ENCODE measurements at regions of chr10 and their contacts with region 1.

Region 1: DNA sequence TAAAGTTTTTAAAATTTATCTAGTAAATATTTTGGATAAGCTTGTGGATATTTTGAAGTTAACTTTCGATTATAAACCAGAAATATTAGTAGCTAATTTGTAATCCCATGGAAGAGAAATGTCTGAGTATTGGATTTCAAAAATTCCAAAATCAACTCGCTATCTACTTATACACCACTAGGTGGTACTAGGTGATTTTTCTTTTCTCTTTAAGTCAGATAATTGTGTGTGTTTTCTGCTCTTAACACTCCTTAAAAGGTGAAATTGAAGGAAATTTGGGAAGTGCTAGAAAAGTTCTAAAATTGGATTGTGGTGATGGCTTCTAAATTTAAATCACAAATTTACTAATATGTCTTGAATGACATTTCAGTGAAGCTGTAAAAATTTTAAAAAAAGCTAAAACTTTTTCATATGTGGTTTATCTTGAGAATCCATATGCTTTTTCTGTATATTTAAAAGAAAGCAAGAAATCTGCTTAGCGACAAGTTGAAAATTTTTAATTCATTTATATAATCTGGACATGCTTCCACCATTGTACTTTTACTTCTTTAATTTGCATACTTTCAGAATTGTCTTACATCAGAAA is 90.2 kb downstream of the IPMK start:
- DNase-seq: no peak

Region 2: DNA sequence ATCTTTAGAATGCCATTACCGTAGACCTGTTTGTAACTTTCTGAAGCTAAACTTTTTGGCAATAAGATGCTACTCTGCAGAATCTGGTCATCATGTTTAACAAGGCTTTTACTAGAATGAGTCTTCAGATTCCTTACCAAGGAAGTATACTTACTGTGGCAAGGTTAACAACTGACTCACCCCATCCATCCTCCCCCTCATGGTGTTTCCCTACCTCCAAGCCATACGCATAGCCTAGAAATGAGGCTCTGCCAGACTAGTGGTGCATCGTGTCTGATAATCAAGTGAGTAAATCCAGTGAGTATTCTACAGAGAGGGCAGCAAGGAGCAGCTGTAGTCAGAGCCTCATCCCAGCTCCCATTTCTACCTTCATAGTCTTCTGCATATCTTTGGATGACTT is 133.4 kb before region 1 on chr10:
- intact Hi-C with region 1: no loop called
- DNase-seq: no peak

Region 3: GRCh38 chr10:58291538-58292174 is 114.2 kb after region 1 on chr10:
- intact Hi-C with region 1: loop called (anchors 5 kb)
- DNase-seq: peak in 28 of 42 donors; percentile 9 to 68 (median 31)

Measured in head of caudate nucleus (tissue), 42 donors.